ENCODE measurements at regions of chr22 and their contacts with region 1.

Region 1: DNA sequence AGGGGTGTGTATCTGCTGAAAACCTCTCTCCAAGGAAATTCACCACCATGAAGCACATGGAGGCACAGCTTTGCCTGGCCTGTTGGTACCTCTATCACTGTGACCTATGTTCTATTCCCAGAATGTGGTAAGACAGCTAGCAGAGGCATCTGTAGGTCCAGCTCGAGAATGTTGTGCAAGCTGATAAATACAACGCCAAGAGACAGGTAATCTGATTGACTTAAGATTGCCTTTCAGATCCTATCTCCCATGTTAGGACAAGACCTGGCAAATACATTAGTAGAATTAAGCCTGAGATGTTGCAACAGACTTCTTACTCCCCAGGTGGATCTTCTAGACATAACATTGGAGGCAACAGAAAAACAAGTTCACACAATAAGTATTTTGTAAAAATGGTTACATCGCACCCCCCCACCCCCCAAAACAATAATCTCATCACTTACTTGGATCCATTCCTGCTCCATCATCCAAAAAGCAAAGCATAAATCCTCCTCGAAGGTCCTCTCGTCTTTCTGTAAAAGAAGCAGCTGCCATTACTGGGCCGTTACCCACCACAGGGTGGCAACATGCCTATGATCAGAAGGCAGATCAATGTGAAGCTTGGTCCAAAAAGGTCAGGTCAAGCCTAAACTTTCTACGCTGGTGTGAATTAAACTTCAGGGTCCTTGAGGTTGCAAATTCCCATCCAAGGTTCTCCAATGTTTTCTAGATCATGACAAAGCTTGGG is 18.5 kb downstream of the MORC2 start:
- DNase-seq: no peak

Region 2: DNA sequence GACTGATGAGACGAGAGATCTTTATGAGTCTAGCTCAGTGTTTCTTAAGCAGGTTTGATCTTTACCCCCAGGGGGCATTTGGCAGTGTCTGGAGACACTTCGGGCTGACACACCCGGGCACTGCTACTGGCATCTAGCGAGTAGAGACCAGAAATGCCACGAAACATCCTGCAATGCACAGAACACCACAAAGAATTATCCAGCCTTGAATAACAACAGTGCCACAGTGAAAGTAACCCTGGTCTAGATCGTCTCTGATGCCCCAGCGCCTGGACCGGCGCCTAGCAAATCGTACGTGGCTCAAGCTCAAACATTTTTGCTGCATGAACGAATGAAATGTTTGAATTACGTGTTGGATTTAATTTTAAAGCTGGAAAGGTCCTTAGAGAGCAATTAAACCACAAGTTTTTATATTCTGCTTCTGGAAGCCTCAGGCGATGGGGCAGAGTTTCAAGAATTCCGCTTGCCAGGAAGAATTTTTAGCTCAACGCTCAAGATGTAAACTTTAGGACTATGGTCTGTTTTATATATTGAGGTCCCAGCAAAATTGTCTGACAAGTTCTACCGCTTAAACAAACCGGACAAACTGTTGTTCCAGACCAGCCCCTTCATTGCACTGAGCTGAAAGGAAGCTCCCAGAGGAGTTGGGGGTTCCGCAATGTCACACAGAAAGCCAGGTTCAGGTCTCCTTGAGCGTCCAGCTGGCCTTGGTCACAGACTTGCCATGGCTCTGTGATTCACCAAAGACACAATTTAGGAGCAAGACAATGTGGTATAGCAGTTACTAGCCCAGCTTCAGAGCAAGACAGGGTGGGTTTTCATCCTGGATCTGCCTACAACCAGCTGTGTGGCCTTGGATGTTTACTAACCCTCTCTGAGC is 86.8 kb after region 1 on chr22:
- in situ Hi-C with region 1: loop called (anchors 5 kb)
- DNase-seq: no peak

Measured in G401 (cell line).